Activated naive CD8-positive, alpha-beta T cell treated with anti-CD3 and anti-CD28 coated beads, Interleukin-2, amount 10 ng/mL, durations not matched to agents 7 days and 5 days (primary cell): ENCODE measurements at regions of chr9 and their contacts with region 1.

Region 1: GRCh38 chr9:114919611-114920010 is 10.8 kb downstream of the TNFSF8 start:
- DNase-seq: no peak
- ATAC-seq: no peak
- H3K4me3 Mint-ChIP-seq: no peak overlapping the region
- H3K27ac Mint-ChIP-seq: no peak overlapping the region
- H3K4me1 Mint-ChIP-seq: peaks cover 80% of the 10 kb centered on the region
- H3K27me3 Mint-ChIP-seq: no peaks in the 10 kb centered on the region

Region 2: GRCh38 chr9:114906908-114907571 is 12.6 kb before region 1 on chr9:
- POLR2A ChIA-PET with region 1: interaction called, 13 read pairs
- DNase-seq: no peak
- ATAC-seq: peak; percentile 19
- H3K4me3 Mint-ChIP-seq: peak overlapping the region; percentile 29
- H3K27ac Mint-ChIP-seq: peak overlapping the region; percentile 87
- H3K4me1 Mint-ChIP-seq: peaks cover 80% of the 10 kb centered on the region
- H3K27me3 Mint-ChIP-seq: no peaks in the 10 kb centered on the region